Ovary (tissue), 10 donors: ENCODE measurements at regions of chr3 and their contacts with region 1.

Region 1: GRCh38 chr3:50321336-50322114 is 1.0 kb downstream of the HYAL2 start:
- DNase-seq: peak; percentile 90 to 93 (median 90)
- H3K4me3 ChIP-seq: peak overlapping the region; percentile 65
- H3K27ac ChIP-seq: peak overlapping the region; percentile 71 to 95
- H3K4me1 ChIP-seq: peaks cover 22% of the 10 kb centered on the region
- H3K27me3 ChIP-seq: no peaks in the 10 kb centered on the region
- CTCF ChIP-seq: peak; percentile 46 to 61 (median 46)
- EP300 ChIP-seq: no peak
- POLR2A ChIP-seq: peak; percentile 65

Region 2: GRCh38 chr3:50260027-50260941 is 61.2 kb before region 1 on chr3:
- intact Hi-C with region 1: loop called in 1 of 4 experiments (anchors 10 kb)
- DNase-seq: peak; percentile 93 to 97 (median 96)
- H3K4me3 ChIP-seq: peak overlapping the region; percentile 60
- H3K27ac ChIP-seq: peak overlapping the region; percentile 97 to 99
- H3K4me1 ChIP-seq: peaks cover 22% of the 10 kb centered on the region
- H3K27me3 ChIP-seq: no peaks in the 10 kb centered on the region
- CTCF ChIP-seq: peak; percentile 99 to 100 (median 100)
- EP300 ChIP-seq: no peak
- POLR2A ChIP-seq: peak; percentile 92

Region 3: DNA sequence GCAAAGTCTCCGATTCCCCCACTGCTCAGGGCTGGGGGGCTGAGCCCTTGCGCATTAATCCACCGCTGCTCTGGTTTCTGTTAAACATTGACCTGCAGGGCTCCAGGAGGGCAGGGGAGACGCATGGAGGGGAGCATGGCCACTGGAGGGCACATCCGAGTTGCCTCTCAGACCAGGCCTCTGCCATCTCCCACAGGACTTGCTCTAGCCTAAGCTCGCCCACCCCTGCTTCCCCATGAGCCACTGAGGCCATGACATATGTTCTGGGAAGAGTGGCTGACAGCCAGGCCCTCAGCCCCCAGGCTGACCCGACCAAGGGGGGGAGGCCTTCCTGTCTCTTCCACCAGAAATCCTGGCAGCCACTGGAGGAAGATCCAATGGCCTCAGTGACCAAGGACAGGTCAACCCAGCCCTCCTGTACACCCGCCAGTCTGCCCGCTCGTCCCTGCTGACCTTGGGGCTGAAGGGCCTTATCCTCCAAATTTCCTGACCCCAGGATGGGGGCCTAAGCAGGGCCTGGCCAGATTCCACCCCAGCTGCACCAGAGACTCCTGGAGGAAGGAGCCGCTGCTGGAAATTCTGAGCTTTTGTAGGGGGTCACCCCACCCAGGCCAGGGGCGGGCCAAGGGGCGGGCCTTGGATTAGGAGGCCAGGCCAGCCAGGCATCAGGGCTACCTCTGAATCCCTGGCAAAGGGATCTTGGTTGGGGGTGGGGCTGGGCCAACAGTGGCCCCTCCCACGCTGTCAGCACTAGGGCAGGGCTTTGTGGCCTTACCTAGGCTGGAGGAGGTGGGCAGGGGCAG is 18.3 kb before region 1 on chr3 and contains the start of gene HYAL1:
- intact Hi-C with region 1: loop called in 1 of 4 experiments (anchors 2 kb)
- DNase-seq: peak; percentile 63 to 80 (median 69)
- H3K4me3 ChIP-seq: no peak within 1 kb of the TSS
- H3K27ac ChIP-seq: peak within 1 kb of the TSS; percentile 45 to 60
- H3K4me1 ChIP-seq: peaks cover 13% of the 10 kb centered on the region
- H3K27me3 ChIP-seq: no peaks in the 10 kb centered on the region
- CTCF ChIP-seq: no peak
- EP300 ChIP-seq: no peak
- POLR2A ChIP-seq: no peak
- total RNA-seq, gene HYAL1: 1.8 to 9.3 (median 3.3) TPM